Right ventricle myocardium inferior (tissue), 1 donor: ENCODE measurements at regions of chr13 and their contacts with region 1.

Region 1: GRCh38 chr13:73835138-73835721 is 299.0 kb downstream of the KLF12 start:
- DNase-seq: no peak
- ATAC-seq: no peak

Region 2: DNA sequence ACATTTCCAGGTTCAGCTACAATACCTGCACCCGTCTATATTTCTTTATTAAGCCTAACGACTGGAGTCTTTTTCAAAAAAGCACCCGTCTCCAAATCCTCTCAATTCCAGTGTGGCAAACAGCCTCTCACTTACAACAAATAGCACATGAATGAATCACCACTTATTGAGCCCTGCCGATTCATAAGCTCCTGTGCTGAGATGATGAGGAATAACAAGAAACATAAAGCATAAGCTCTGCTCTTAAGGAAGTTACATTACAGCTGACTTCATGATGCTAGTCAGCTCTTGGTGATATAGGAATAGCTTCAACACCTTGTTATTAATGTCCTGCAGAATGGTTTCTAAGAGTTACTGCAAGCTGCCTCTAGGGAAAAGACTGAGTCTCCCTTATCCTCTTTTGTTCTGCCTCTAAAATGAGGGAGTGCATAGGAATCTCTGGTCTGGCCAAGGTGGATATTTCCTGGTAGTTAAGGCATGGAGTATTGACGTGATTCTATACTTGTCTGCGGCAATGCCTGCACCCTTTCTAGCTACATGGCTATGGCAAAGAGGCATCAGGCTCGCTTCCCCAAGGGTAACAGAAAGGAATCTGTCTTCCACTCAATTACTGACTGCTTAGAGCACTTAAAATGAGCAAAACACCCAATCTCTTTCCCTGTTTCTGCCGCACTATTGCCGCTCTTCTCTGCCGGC is 103.3 kb after region 1 on chr13:
- intact Hi-C with region 1: no loop called
- DNase-seq: no peak
- ATAC-seq: no peak

Region 3: GRCh38 chr13:74040200-74040599 is 205.0 kb after region 1 on chr13:
- intact Hi-C with region 1: loop called (anchors 10 kb)
- DNase-seq: peak; percentile 70
- ATAC-seq: peak; percentile 76

Region 4: DNA sequence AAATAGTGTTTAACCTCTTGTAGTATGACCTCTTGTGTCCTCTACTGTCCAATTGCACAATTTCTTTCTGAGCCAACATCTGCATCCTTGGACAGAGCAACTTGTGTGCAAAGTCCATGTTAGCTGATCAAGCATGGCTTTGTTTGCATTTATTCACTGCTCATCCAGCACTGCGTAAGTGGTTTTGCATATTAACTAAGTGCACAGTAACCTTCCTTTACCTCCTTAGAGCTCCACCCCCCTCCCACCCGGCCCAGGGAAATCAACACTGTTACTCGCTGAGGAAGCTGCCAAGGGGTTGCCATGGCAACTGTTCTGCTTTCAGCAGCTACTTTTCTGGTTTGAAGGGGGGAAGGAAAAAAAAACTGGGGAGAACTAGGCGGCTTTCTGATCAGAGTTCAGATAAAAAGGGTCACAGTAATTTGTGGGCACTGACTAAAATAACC is 452.5 kb after region 1 on chr13:
- intact Hi-C with region 1: loop called (anchors 1 kb)
- DNase-seq: peak; percentile 82
- ATAC-seq: peak; percentile 39

Region 5: DNA sequence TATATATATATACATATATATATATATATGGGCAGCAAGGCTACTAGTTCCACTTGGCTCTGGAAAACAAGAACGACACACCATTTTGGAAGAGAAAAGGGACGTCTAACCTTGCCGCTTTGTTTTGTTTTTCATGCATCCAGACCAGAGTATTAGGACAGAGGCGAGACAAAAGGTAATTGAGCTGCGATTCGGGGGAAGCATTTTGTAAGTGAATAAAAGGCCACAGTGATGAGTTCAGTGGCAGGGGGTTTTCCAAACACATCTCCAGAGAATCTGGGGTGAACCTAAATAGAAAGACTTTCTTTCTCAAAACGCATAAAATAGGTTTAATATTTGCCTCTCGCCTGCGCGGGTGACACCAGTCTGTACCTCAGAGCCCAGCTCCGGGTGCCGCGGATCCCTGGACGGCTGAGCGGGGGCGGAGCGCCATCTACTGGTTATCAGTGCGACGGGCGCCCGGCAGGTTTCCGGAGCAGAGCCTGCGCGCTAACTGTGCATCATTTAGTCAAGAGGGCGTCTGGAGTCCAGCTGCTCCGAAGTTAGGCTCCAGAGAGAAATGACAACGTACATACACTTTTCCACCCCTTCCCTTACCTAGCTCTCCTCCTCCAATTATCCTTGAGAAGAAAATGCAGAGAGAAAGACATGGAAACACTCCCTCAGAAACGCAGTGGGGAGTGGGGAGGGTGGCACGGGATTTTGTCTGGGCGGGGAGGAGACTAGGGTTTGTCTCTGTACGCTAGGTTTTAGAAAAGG is 1384.4 kb after region 1 on chr13:
- intact Hi-C with region 1: loop called (anchors 10 kb)
- DNase-seq: peak; percentile 88
- ATAC-seq: peak; percentile 92